T-cell (primary cell): ENCODE measurements at regions of chr12 and their contacts with region 1.

Region 1: DNA sequence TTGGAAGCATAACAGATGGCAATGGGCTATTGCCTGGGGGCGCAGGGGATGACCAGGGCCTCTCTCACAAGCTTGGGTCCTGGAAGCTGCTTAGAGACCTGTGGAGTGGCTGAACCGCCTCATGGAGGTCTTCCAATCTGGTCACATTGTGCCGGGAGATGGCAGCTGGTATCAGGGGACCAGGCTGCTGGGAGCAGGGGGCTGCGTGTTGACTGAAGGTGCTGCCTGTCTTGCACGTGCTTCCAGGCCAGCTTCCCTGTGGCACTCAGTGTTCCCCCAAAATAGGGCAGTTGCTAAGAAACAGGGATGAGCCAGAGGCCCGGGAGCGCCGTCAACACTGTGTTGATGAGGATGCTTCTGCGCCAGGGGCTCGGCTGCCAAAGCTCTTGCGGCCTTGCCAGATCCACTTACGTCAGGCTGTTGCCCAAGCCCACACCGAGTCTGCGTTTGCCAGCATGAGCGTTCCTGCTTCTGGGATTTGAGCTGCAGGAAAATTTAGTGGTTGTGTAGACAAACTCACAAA is 39.8 kb downstream of the ELK3 start:
- DNase-seq: no peak
- ATAC-seq: no peak
- H3K4me3 ChIP-seq: no peak overlapping the region
- H3K4me3 Mint-ChIP-seq: no peak overlapping the region
- H3K27ac ChIP-seq: no peak overlapping the region
- H3K27ac Mint-ChIP-seq: peak overlapping the region in 1 of 2 donors; percentile 34
- H3K4me1 ChIP-seq: peaks cover 24 to 43% of the 10 kb centered on the region in 2 experiments
- H3K4me1 Mint-ChIP-seq: peaks cover 45 to 66% (median 58%) of the 10 kb centered on the region in 3 donors
- H3K27me3 ChIP-seq: no peaks in the 10 kb centered on the region
- H3K27me3 Mint-ChIP-seq: no peaks in the 10 kb centered on the region

Region 2: DNA sequence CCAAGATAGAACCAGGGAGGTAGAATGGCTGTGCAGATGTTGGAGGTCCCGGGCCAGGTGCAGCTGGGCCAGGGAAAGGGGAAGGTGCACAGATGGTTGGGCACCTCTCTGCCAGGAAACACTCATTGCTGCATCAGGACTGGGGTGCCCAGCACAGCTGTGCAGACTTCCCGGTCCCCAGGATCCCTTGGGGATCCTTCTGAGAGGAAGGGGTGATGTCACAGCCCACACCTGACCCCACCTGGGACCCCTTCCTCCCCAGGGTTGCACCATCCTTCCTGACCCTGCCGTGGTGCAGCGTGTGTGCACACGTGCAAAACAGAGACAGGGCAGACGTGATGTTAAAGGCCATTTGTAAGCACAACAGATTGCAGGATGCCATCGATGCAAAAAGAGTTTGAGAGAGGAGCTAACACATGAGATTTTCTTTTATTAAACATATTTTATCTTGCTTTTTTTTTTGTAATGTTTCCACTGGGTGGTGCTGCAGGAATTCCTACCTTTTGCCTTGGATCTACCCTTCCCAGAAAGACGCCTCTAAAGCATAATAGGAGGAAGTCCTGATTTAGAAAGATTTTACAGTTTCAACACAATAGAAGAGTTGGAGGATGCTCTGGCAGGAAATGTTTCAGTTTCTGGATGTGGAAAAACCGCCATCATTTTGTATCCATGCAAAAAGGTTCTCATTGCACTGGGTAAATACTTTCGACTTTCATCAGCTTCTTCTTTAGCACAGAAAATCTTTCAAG is 25.0 kb before region 1 on chr12:
- CTCF ChIA-PET with region 1: no interaction called
- POLR2A ChIA-PET with region 1: interaction called in 1 of 2 experiments, 14 read pairs
- DNase-seq: no peak
- ATAC-seq: peak in 3 of 4 experiments; percentile 11 to 17 (median 13)
- H3K4me3 ChIP-seq: peak overlapping the region in 1 of 2 donors; percentile 25
- H3K4me3 Mint-ChIP-seq: peak overlapping the region; percentile 71 to 79 (median 73)
- H3K27ac ChIP-seq: peak overlapping the region; percentile 48
- H3K27ac Mint-ChIP-seq: peak overlapping the region; percentile 97
- H3K4me1 ChIP-seq: peaks cover 77 to 84% of the 10 kb centered on the region in 2 experiments
- H3K4me1 Mint-ChIP-seq: peaks cover 99 to 100% (median 99%) of the 10 kb centered on the region in 3 donors
- H3K27me3 ChIP-seq: no peaks in the 10 kb centered on the region
- H3K27me3 Mint-ChIP-seq: no peaks in the 10 kb centered on the region

Region 3: GRCh38 chr12:96335270-96335669 is 101.3 kb after region 1 on chr12:
- CTCF ChIA-PET with region 1: no interaction called
- POLR2A ChIA-PET with region 1: no interaction called
- DNase-seq: peak in 1 of 35 experiments; percentile 31
- ATAC-seq: peak; percentile 33 to 81 (median 41)
- H3K4me3 ChIP-seq: no peak overlapping the region
- H3K4me3 Mint-ChIP-seq: peak overlapping the region in 1 of 3 donors; percentile 38
- H3K27ac ChIP-seq: no peak overlapping the region
- H3K27ac Mint-ChIP-seq: peak overlapping the region; percentile 17 to 75
- H3K4me1 ChIP-seq: peaks cover 0 to 21% of the 10 kb centered on the region in 2 experiments
- H3K4me1 Mint-ChIP-seq: peaks cover 53 to 60% (median 57%) of the 10 kb centered on the region in 3 donors
- H3K27me3 ChIP-seq: no peaks in the 10 kb centered on the region
- H3K27me3 Mint-ChIP-seq: no peaks in the 10 kb centered on the region